ENCODE measurements at regions of chr10 and their contacts with region 1.

Region 1: DNA sequence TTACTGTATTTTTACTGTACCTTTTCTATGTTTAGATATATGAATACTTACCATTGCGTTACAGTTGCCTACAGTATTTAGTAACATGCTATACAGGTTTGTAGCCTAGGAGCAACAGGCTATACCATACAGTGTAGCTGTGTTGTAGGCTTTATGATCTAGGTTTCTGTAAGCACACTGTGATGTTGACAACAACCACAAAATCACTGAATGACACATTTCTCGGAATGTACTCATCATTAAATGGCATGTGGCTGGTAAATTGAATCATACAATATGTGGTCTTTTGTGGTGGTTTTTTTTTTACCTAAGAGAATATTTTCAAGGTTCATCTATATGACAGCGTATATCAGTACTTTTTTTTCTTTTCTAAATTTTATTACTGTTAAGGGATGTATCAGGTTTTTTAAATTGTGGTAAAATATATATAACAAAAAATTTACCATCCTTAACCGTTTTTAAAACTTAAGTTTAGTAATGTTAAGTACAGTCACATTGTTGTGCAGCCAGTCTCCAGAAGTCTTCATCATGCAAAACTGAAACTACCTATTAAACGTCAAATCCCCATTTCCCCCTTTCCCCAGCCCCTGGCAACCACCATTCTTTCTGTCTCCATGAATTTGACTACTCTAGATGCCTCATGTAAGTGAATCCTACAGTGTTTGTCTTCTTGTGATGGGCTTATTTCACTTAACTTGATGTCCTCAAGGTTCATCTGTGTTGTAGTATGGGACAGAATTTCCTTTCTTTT is 21.5 kb downstream of the BTAF1 start:
- DNase-seq: no peak
- H3K4me3 ChIP-seq: no peak overlapping the region
- CTCF ChIP-seq: no peak
- POLR2A ChIP-seq: no peak

Region 2: DNA sequence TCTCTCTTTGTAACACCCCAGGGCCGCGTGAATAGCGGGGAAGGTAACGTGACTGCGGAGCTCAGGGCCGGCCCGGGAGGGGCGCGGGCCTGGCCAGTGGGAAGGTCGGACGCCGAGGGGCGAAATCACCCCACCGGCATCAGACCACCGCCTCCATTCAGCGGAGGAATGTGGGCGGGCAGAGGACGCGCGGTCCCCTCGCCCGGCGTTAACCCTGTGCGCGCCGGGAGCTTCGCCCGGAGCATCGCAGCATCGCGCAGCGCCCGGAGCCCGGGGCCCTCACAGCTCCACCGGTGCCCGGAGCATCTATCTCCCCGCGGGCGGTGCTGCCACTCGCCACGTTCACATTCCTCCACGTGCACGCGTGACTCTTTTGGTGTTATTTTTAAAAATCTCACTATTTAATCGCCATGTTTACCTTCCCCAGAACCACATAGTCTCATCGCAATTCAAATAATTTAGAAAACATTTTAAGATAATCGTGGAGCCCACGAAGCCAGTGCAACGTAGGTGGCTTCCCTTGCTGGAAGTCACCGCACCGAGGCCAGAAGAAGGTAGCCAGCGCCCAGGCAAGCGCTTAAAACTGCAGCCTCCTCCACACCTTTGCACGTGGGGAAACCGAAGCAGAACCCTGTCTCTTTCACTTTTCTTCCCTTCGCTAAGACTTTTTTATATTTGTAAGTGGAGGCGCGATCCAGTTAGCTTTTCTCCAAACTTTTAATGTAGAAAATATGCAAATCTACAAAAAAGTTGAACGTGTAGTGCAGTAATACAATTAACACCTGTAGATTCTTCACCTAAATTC is 57.6 kb before region 1 on chr10:
- intact Hi-C with region 1: no loop called
- DNase-seq: peak in 1 of 2 donors; percentile 88
- H3K4me3 ChIP-seq: peak overlapping the region; percentile 15
- CTCF ChIP-seq: no peak
- POLR2A ChIP-seq: no peak

Region 3: GRCh38 chr10:92003258-92003657 is 58.2 kb after region 1 on chr10:
- intact Hi-C with region 1: loop called (anchors 10 kb)
- DNase-seq: no peak
- H3K4me3 ChIP-seq: no peak overlapping the region
- CTCF ChIP-seq: no peak
- POLR2A ChIP-seq: no peak

Measured in lower leg skin (tissue), 4 donors.